ENCODE measurements at regions of chr20 and their contacts with region 1.

Region 1: DNA sequence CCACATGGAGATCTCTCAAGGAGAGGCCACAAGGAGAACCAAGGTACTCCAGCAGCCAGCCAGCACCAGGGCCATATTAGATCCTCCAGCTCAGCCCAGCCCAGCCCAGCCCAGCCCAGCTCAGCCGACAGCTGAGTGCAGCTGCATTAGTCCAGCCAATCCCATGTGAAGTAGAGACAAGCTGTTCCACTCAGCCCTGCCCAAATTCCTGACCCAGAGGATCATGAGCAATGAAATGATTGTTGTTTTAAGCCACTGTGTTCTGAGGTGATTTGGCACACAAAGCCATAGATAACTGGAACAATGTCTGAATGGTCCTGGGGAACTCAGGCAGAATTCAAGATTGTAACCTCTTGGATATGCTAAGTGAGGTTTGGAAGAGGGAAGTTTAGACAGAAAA is 59.5 kb upstream of the BMP2 start:
- DNase-seq: peak; percentile 83
- H3K4me3 Mint-ChIP-seq: peak overlapping the region; percentile 29
- H3K27ac Mint-ChIP-seq: peak overlapping the region; percentile 85
- H3K4me1 Mint-ChIP-seq: peaks cover 67% of the 10 kb centered on the region
- H3K27me3 Mint-ChIP-seq: no peaks in the 10 kb centered on the region
- CTCF ChIP-seq: no peak

Region 2: DNA sequence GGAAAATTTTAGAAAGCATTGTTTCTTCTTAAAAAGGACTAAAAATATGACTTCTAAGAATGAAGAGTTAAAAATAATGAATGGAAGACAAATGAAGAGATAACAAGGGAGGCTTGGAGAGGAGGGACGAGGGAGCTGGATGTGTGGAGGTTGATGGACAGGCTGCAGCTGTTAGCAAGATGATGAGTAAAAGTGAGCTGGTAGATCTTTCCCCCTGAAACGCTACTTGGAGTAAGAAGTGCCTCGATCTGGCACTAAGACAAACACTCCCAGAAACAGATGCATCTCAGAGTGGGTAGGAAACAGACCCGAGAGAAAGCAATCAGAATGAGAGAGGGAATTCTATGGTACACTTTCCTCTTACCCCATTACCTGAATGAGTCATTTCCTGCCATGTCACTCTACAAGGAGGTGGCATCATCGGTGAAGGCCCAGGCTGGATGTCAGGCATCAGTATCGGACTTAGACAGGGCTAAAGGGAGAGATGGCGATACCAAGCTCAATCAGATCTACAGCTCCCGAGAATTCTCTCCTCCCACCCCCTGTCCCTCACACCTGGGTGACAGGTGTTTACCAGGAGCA is 94.6 kb before region 1 on chr20:
- CTCF ChIA-PET with region 1: no interaction called
- POLR2A ChIA-PET with region 1: no interaction called
- intact Hi-C with region 1: no loop called
- DNase-seq: peak; percentile 68
- H3K4me3 Mint-ChIP-seq: no peak overlapping the region
- H3K27ac Mint-ChIP-seq: peak overlapping the region; percentile 61
- H3K4me1 Mint-ChIP-seq: peaks cover 21% of the 10 kb centered on the region
- H3K27me3 Mint-ChIP-seq: no peaks in the 10 kb centered on the region
- CTCF ChIP-seq: no peak

Region 3: GRCh38 chr20:6663104-6663503 is 44.9 kb before region 1 on chr20:
- CTCF ChIA-PET with region 1: interaction called, 8 read pairs
- POLR2A ChIA-PET with region 1: interaction called, 18 read pairs
- intact Hi-C with region 1: no loop called
- DNase-seq: peak; percentile 13
- H3K4me3 Mint-ChIP-seq: no peak overlapping the region
- H3K27ac Mint-ChIP-seq: no peak overlapping the region
- H3K4me1 Mint-ChIP-seq: peaks cover 28% of the 10 kb centered on the region
- H3K27me3 Mint-ChIP-seq: no peaks in the 10 kb centered on the region
- CTCF ChIP-seq: no peak

Region 4: DNA sequence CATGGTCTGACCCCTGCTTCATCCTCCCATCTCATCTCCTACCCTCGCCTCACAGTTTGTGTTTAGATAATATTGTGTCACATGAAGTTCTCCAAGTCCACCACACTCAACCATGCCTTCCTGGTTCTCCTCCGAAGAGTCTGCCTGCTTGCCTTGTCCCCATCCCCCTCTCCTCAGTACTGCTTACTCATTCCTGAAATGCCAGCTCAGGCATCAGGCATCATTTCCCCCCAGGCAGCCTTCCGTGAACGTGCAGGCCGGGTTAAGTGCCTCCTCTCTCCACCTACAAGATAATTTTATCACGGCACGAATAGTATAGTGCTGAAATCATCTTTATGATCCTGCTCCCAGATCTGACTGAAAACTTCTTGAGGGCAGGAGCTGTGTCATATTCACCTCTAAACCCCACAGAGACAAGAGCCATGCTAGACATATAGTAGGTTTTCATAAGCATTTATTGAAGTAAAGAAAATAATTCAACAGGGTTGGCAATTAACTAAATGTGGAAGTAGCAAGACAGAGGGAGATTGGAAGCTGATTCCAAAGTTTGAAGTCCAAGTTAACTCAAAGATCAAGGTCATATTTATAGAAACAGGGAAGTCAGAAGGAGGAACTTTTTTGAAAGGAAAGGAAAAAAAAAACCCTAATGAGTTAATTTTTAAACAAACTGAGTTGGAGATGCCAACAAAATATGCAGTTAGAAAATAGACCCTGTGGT is 10.8 kb after region 1 on chr20:
- CTCF ChIA-PET with region 1: interaction called, 11 read pairs
- POLR2A ChIA-PET with region 1: interaction called, 36 read pairs
- intact Hi-C with region 1: no loop called
- DNase-seq: peak; percentile 75
- H3K4me3 Mint-ChIP-seq: no peak overlapping the region
- H3K27ac Mint-ChIP-seq: peak overlapping the region; percentile 74
- H3K4me1 Mint-ChIP-seq: peaks cover 9% of the 10 kb centered on the region
- H3K27me3 Mint-ChIP-seq: no peaks in the 10 kb centered on the region
- CTCF ChIP-seq: no peak